ENCODE measurements at regions of chr14 and their contacts with region 1.

Region 1: DNA sequence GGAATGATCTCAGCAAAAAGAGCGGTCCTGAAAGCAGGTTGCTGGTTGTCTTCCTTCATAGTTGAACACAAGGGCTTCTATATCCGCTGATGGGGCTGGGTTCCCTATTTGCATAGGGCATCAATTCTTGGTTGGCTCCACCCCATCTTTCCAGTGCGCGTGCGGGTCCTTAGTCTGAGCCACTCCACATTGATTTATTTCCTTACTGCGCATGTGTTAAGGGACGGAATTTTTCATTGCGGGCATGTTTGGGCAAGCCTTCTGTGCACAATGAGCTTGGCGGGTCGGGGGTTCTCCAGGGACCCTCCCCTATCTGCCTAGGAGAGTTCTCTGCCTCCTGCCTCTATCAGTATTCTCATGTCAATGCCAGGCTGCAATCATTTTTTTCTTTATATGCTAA is 21.2 kb upstream of the DLGAP5 start:
- DNase-seq: no peak
- H3K4me3 ChIP-seq: no peak overlapping the region
- H3K4me3 Mint-ChIP-seq: no peak overlapping the region
- H3K27ac ChIP-seq: no peak overlapping the region
- H3K27ac Mint-ChIP-seq: no peak overlapping the region
- H3K4me1 ChIP-seq: no peaks in the 10 kb centered on the region
- H3K4me1 Mint-ChIP-seq: peaks cover 0 to 5% (median 2%) of the 10 kb centered on the region in 4 donors
- H3K27me3 ChIP-seq: no peaks in the 10 kb centered on the region
- H3K27me3 Mint-ChIP-seq: peaks cover 0 to 1% of the 10 kb centered on the region in 2 donors

Region 2: DNA sequence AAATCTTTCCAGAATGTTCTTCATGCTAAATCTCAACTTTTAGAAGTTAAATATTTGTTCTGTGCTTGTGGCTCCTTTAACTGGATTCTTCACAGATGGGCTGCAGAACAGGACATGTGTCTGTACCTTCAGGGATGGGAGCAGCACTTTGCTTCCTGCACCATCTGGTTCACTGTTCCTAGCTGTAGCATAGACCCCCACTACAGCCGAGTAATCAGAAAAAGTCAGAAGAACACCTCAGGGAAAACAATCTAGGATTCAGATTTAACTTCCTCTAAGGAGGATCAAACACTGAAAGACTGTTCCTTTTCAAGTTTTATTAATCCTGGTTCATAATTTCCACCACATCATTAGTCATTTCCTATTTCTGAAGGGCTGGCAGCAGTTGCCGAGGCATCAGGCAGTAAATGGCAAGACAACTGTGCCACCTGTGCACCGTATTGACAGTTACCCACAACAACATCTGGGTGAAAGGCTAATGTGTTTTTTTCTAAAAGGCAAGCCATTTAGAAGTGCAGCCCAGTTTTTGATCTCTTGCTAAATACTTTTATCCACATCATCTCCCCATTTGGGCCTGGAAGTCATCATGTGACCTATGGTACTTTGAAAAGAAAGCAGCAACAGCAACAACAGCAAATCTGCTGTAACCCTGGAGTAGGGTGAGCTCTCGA is 1043.2 kb before region 1 on chr14:
- CTCF ChIA-PET with region 1: no interaction called
- POLR2A ChIA-PET with region 1: no interaction called
- intact Hi-C with region 1: no loop called
- DNase-seq: peak in 1 of 5 donors; percentile 1
- H3K4me3 ChIP-seq: no peak overlapping the region
- H3K4me3 Mint-ChIP-seq: no peak overlapping the region
- H3K27ac ChIP-seq: no peak overlapping the region
- H3K27ac Mint-ChIP-seq: peak overlapping the region in 1 of 7 donors; percentile 3
- H3K4me1 ChIP-seq: no peaks in the 10 kb centered on the region
- H3K4me1 Mint-ChIP-seq: peaks cover 2 to 5% (median 4%) of the 10 kb centered on the region in 4 donors
- H3K27me3 ChIP-seq: no peaks in the 10 kb centered on the region
- H3K27me3 Mint-ChIP-seq: peaks cover 9 to 18% of the 10 kb centered on the region in 2 donors

Region 3: GRCh38 chr14:55191203-55192053 is 21.2 kb before region 1 on chr14 and contains the start of gene DLGAP5:
- CTCF ChIA-PET with region 1: no interaction called
- POLR2A ChIA-PET with region 1: interaction called, 3 read pairs
- intact Hi-C with region 1: loop called (anchors 1 kb)
- DNase-seq: peak; percentile 89 to 95 (median 90)
- H3K4me3 ChIP-seq: peak within 1 kb of the TSS; percentile 36 to 76
- H3K4me3 Mint-ChIP-seq: peak within 1 kb of the TSS; percentile 84 to 97 (median 90)
- H3K27ac ChIP-seq: peak within 1 kb of the TSS; percentile 60
- H3K27ac Mint-ChIP-seq: peak within 1 kb of the TSS; percentile 13 to 94 (median 87)
- H3K4me1 ChIP-seq: peaks cover 15% of the 10 kb centered on the region
- H3K4me1 Mint-ChIP-seq: peaks cover 6 to 25% (median 13%) of the 10 kb centered on the region in 4 donors
- H3K27me3 ChIP-seq: no peaks in the 10 kb centered on the region
- H3K27me3 Mint-ChIP-seq: no peaks in the 10 kb centered on the region
- total RNA-seq, gene DLGAP5: not detected

Region 4: DNA sequence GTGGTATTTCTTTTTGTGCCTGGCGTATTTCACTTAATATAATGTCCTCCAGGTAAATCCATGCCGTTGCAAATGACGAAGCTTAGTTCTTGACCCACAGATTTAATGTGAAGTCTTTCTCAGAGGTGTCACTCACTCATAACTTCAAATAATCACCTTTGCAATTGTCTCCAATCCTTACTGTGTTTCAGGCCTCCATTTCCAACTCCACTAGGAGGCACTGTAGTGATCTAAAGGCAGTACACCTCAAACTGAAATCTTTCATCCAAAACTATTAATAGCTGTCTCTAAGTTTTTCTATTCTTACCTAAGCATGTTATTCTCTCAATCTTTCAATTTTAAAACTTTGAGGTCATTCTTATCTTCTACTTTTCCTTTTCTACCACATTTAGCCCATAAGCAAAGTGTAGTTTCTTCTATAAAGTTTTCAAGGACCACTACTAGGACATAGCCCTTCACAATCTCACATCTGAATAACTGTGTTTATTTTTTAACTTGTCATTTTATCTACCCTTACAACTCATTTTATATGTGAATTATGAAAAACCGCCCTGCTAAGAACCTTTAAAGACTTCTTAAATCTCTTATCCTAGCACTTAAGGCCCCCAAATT is 33.1 kb after region 1 on chr14:
- CTCF ChIA-PET with region 1: interaction called, 6 read pairs
- POLR2A ChIA-PET with region 1: no interaction called
- intact Hi-C with region 1: loop called (anchors 5 kb)
- DNase-seq: peak; percentile 43 to 61 (median 48)
- H3K4me3 ChIP-seq: no peak overlapping the region
- H3K4me3 Mint-ChIP-seq: no peak overlapping the region
- H3K27ac ChIP-seq: no peak overlapping the region
- H3K27ac Mint-ChIP-seq: peak overlapping the region in 1 of 7 donors; percentile 50
- H3K4me1 ChIP-seq: no peaks in the 10 kb centered on the region
- H3K4me1 Mint-ChIP-seq: peaks cover 0 to 1% (median 0%) of the 10 kb centered on the region in 4 donors
- H3K27me3 ChIP-seq: no peaks in the 10 kb centered on the region
- H3K27me3 Mint-ChIP-seq: peaks cover 8% of the 10 kb centered on the region in 2 donors

Region 5: GRCh38 chr14:55255979-55256378 is 43.3 kb after region 1 on chr14:
- CTCF ChIA-PET with region 1: no interaction called
- POLR2A ChIA-PET with region 1: no interaction called
- intact Hi-C with region 1: no loop called
- DNase-seq: no peak
- H3K4me3 ChIP-seq: no peak overlapping the region
- H3K4me3 Mint-ChIP-seq: no peak overlapping the region
- H3K27ac ChIP-seq: no peak overlapping the region
- H3K27ac Mint-ChIP-seq: no peak overlapping the region
- H3K4me1 ChIP-seq: no peaks in the 10 kb centered on the region
- H3K4me1 Mint-ChIP-seq: no peaks in the 10 kb centered on the region
- H3K27me3 ChIP-seq: no peaks in the 10 kb centered on the region
- H3K27me3 Mint-ChIP-seq: peaks cover 1 to 7% of the 10 kb centered on the region in 2 donors

Region 6: GRCh38 chr14:55425091-55425490 is 212.5 kb after region 1 on chr14:
- CTCF ChIA-PET with region 1: interaction called, 5 read pairs
- POLR2A ChIA-PET with region 1: no interaction called
- intact Hi-C with region 1: loop called (anchors 1 kb)
- DNase-seq: no peak
- H3K4me3 ChIP-seq: no peak overlapping the region
- H3K4me3 Mint-ChIP-seq: no peak overlapping the region
- H3K27ac ChIP-seq: no peak overlapping the region
- H3K27ac Mint-ChIP-seq: no peak overlapping the region
- H3K4me1 ChIP-seq: peaks cover 4% of the 10 kb centered on the region
- H3K4me1 Mint-ChIP-seq: peaks cover 3 to 5% (median 4%) of the 10 kb centered on the region in 4 donors
- H3K27me3 ChIP-seq: no peaks in the 10 kb centered on the region
- H3K27me3 Mint-ChIP-seq: no peaks in the 10 kb centered on the region

Region 7: DNA sequence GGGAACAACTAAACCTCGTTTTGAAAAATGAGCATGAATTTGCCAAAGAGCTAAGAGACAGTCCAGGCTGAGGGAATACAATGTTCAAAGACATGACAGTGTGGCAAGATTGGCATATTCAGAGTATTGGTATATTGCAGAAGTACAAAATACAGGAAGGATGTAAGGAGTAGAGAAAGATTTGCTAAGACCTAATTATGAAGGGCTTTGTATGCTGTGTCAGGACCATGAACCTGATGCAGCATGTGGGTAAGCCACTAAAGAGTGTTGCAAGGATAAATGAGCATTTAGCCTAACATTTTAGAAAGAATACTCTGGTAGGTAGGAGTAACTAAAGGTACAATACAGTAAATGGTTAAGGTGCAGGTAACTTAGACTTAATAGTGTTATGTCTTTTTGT is 432.5 kb after region 1 on chr14:
- CTCF ChIA-PET with region 1: no interaction called
- POLR2A ChIA-PET with region 1: no interaction called
- intact Hi-C with region 1: loop called (anchors 10 kb)
- DNase-seq: no peak
- H3K4me3 ChIP-seq: no peak overlapping the region
- H3K4me3 Mint-ChIP-seq: no peak overlapping the region
- H3K27ac ChIP-seq: no peak overlapping the region
- H3K27ac Mint-ChIP-seq: peak overlapping the region in 2 of 7 donors; percentile 25 to 58
- H3K4me1 ChIP-seq: no peaks in the 10 kb centered on the region
- H3K4me1 Mint-ChIP-seq: peaks cover 0 to 7% (median under 1%) of the 10 kb centered on the region in 4 donors
- H3K27me3 ChIP-seq: no peaks in the 10 kb centered on the region
- H3K27me3 Mint-ChIP-seq: no peaks in the 10 kb centered on the region

Measured in CD4-positive, alpha-beta memory T cell (primary cell).